Astrocyte of the cerebellum (primary cell): ENCODE measurements at regions of chr6 and their contacts with region 1.

Region 1: DNA sequence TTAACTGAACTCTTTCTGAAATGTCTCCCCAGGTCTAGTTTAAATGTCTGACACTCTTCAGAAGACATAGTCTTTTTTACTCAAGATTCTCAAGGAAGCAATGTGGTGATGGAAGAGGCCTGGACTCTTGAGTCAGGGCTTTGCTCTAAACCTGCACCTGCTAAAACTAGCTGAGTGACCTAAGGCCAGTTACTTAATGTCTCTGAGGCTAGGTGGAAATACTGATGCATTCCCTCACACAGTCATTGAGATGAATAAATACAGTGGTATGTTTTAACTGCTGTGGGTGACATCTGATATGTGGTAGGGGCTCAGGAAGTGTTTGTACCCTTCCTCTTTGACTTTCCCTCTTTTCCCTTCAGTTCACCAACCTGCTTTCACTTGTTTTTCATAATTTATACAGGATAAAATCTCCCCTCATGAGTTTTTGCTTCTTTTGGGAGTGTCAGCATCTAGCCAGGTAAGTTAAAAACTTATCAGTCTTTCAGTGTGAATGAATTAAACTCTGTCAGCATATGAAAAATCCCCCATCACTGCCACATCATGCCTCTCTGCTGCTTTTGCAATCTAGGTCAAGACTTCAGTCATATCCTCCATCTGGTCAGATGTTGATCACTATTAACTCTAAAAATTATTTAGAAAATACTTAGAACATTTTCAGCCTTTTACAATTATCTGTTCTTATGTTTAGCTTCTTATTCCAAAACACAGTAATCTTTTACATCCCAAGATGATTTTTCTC is 178.7 kb upstream of the TNFAIP3 start:
- DNase-seq: no peak
- H3K4me3 ChIP-seq: no peak overlapping the region
- CTCF ChIP-seq: no peak

Region 2: GRCh38 chr6:137631323-137631722 is 57.1 kb before region 1 on chr6:
- in situ Hi-C with region 1: no loop called
- DNase-seq: no peak
- H3K4me3 ChIP-seq: no peak overlapping the region
- CTCF ChIP-seq: no peak

Region 3: GRCh38 chr6:137652966-137653705 is 35.3 kb before region 1 on chr6:
- in situ Hi-C with region 1: loop called (anchors 5 kb)
- DNase-seq: no peak
- H3K4me3 ChIP-seq: no peak overlapping the region
- CTCF ChIP-seq: no peak